PC-9 (cell line): ENCODE measurements at regions of chr14 and their contacts with region 1.

Region 1: DNA sequence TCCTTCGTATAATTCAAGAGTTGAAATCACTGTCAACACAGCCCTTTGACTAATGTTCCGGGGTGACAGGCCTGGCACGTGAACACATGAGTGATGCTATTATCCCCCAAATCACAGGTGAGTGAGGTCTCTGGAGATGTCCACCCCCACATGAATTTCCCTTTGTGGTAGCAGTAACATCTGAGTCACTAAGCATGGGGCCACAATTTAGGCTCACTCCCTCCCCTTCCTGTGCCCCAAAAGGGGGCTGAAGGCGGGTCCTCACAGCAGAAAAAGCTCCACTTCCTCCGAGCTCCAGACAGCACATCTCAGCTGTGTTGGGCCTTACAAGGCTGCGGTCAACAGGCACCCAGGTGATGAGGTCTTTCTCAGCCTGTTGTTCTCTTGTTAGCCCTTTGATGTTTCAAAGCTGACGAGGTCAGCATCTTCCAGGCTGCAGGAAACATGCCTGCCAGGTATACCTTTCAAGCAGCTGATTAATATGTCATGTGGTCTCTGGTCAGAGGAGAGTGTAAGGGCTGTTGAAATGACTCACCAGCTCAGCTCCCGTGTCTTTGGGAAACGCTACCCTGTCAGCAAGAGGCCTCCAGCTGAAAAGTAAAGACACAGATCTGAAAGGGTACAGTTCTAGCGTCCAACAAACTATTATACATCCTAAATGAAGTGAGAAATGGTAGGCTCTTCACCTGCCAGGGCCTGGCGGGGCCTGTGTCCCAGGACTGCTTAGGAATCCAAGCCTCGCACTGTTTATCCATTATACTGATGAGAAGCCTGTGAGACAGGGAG is 107.3 kb downstream of the ZFP36L1 start:
- DNase-seq: peak; percentile 68 to 97
- H3K4me3 ChIP-seq: no peak overlapping the region
- H3K27ac ChIP-seq: peak overlapping the region; percentile 90
- H3K4me1 ChIP-seq: peaks cover 87% of the 10 kb centered on the region
- H3K27me3 ChIP-seq: no peaks in the 10 kb centered on the region
- CTCF ChIP-seq: no peak

Region 2: GRCh38 chr14:67943947-67944346 is 741.7 kb before region 1 on chr14:
- CTCF ChIA-PET with region 1: no interaction called
- POLR2A ChIA-PET with region 1: interaction called, 4 read pairs
- intact Hi-C with region 1: loop called (anchors 10 kb)
- DNase-seq: peak; percentile 54 to 67
- H3K4me3 ChIP-seq: no peak overlapping the region
- H3K27ac ChIP-seq: peak overlapping the region; percentile 37
- H3K4me1 ChIP-seq: peaks cover 43% of the 10 kb centered on the region
- H3K27me3 ChIP-seq: no peaks in the 10 kb centered on the region
- CTCF ChIP-seq: peak; percentile 91

Region 3: DNA sequence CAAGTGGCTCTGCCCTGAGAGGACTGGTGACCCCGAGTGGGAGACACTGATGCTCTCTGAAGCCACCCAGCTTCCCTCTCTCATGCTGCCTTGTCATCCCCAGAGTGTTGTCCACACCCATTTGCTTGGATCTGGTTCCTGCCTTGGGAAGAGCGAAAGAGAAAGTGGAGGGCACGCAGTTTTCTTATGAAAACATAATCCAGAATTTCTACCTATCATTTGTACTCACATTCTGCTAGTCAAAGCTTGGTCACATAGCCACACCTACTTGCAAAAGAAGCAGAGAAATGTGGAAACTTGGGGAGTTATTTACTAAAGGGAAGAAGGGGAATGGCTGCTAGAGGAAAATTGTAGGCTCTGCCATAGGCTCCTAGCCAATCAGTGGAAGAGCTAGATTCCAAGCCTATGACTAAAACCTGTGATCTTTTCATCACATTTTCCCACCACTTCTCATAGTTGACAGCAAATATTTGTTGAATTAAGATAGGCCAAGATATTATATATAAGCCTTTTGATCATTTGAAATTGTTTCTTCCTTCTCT is 219.1 kb before region 1 on chr14:
- CTCF ChIA-PET with region 1: no interaction called
- POLR2A ChIA-PET with region 1: no interaction called
- intact Hi-C with region 1: loop called (anchors 2 kb)
- DNase-seq: peak; percentile 65 to 100
- H3K4me3 ChIP-seq: peak overlapping the region; percentile 23; the same call in 1 of the 2 replicates
- H3K27ac ChIP-seq: peak overlapping the region; percentile 96
- H3K4me1 ChIP-seq: peaks cover 95% of the 10 kb centered on the region
- H3K27me3 ChIP-seq: no peaks in the 10 kb centered on the region
- CTCF ChIP-seq: no peak

Region 4: GRCh38 chr14:68518761-68519665 is 166.6 kb before region 1 on chr14:
- CTCF ChIA-PET with region 1: no interaction called
- POLR2A ChIA-PET with region 1: no interaction called
- intact Hi-C with region 1: no loop called
- DNase-seq: no peak
- H3K4me3 ChIP-seq: no peak overlapping the region
- H3K27ac ChIP-seq: peak overlapping the region; percentile 69; the same call in 1 of the 2 replicates
- H3K4me1 ChIP-seq: peaks cover 68% of the 10 kb centered on the region
- H3K27me3 ChIP-seq: no peaks in the 10 kb centered on the region
- CTCF ChIP-seq: no peak

Region 5: DNA sequence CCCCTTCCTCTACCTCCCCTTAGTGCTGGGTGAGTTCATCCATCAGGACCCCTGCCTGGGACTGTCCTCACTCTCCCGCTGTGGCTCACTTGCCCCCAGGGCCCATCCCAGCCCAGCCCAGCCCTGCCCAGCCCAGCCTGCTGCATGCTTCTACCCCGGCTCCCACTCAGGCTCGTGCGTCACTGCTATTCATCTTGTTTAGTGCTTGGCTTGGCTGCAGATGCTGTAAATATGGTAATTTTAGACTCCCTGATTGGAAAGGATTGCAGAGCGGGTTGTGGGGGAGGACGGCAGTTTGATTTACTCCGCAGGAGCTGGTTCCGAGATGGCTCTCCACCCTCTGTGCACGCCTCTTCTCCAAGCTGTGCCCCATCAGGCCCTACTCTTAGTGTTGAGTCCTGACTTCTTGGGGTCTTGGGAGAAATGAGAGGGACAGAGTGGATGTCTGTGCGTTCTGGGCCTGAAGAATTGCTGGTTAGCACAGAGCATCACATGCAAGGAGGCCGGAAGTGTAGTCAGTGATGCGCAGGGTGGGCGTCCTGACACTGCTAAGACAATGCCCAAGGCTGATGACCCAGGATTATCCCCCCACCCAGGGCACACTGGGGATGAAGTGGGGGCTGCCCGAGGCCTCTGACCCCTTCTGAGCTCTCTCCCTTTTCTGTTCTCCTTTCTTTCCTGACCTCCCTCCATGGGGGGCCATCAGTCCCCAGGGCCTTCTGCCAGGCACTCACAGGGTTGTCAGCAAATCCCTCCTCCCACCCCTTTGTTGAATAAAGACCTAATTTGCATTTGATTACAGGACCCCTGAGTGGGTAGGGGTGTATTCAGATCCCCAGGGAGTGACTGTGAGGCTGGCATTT is 137.2 kb before region 1 on chr14:
- CTCF ChIA-PET with region 1: no interaction called
- POLR2A ChIA-PET with region 1: interaction called, 3 read pairs
- intact Hi-C with region 1: loop called (anchors 1 kb)
- DNase-seq: peak; percentile 77 to 86
- H3K4me3 ChIP-seq: no peak overlapping the region
- H3K27ac ChIP-seq: peak overlapping the region; percentile 96
- H3K4me1 ChIP-seq: peaks cover 70% of the 10 kb centered on the region
- H3K27me3 ChIP-seq: no peaks in the 10 kb centered on the region
- CTCF ChIP-seq: no peak

Region 6: DNA sequence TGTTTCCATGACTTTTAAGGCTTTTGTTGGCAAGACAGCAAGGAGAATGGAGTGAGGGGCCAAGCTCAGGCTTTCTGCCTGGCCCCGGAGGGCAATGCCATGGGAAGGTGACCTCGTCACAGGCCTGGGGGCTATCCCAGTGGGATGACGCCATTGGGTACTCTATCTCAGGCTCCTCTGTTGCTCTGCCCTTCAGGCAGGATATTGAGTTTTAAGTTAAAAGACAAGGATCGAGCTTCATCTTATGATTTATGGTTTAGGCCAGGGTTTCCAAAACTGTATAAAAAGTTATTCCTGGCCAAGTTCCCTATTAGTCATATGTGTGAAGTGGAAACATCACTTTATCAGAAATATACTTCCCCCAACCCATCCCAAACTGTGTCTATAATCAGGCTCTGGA is 20.5 kb before region 1 on chr14:
- CTCF ChIA-PET with region 1: interaction called, 10 read pairs
- POLR2A ChIA-PET with region 1: no interaction called
- intact Hi-C with region 1: no loop called
- DNase-seq: no peak
- H3K4me3 ChIP-seq: no peak overlapping the region
- H3K27ac ChIP-seq: no peak overlapping the region
- H3K4me1 ChIP-seq: peaks cover 62% of the 10 kb centered on the region
- H3K27me3 ChIP-seq: no peaks in the 10 kb centered on the region
- CTCF ChIP-seq: no peak

Region 7: GRCh38 chr14:69191340-69192111 is 505.9 kb after region 1 on chr14 and contains the start of gene EXD2:
- CTCF ChIA-PET with region 1: no interaction called
- POLR2A ChIA-PET with region 1: interaction called, 13 read pairs
- intact Hi-C with region 1: no loop called
- DNase-seq: peak; percentile 89 to 93
- H3K4me3 ChIP-seq: peak within 1 kb of the TSS; percentile 67
- H3K27ac ChIP-seq: peak within 1 kb of the TSS; percentile 36
- H3K4me1 ChIP-seq: peaks cover 16% of the 10 kb centered on the region
- H3K27me3 ChIP-seq: no peaks in the 10 kb centered on the region
- CTCF ChIP-seq: no peak
- total RNA-seq, gene EXD2: 21.4 and 25.5 TPM in 2 replicates